ENCODE measurements at regions of chr1 and their contacts with region 1.

Region 1: GRCh38 chr1:230167419-230167852 is 100.4 kb downstream of the GALNT2 start:
- DNase-seq: peak; percentile 12
- H3K4me3 Mint-ChIP-seq: no peak overlapping the region
- H3K27ac Mint-ChIP-seq: no peak overlapping the region
- H3K4me1 Mint-ChIP-seq: peaks cover 39% of the 10 kb centered on the region
- H3K27me3 Mint-ChIP-seq: no peaks in the 10 kb centered on the region

Region 2: DNA sequence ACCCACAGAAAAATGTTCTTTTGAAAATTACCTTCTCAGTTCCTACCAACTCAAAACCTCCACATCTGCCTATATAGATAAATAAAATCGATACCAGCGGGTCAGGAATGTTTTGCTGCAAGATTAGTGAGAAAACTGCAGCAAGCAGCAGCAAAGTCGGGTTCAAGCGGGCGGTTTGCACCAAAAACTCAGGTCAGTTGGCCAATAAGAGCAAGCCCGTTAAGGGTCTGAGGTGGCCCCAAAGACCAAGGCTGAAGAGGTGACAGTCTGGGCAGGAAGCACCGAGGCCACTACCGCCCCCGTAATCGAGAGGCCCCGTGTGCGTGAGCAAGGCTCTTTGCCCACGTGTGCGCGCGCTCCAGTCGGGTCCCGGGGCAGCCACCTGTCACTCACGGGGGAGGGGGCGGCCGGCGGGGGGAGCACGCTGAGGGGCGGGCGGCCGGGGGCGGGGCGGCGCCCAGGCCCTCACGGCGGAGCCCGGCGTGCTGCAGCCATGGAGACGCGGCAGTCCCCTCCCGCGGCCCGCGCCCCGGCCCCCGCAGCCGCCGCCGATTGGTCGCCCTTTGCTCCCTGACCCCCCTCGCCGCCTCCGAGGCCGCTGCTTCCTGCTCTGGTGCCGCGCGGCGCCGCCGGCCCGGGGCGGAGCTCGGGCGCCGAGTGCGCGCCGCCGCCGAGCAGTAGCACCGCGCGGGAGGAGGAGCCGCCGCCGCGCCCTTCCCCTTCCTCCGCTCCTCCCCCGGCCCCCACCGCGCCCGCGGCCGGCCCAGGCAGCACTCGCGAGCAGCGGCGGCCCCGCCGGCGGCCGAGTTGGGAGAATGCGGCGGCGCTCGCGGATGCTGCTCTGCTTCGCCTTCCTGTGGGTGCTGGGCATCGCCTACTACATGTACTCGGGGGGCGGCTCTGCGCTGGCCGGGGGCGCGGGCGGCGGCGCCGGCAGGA is 100.7 kb before region 1 on chr1 and contains the start of gene GALNT2:
- intact Hi-C with region 1: loop called (anchors 1 kb)
- DNase-seq: peak; percentile 88
- H3K4me3 Mint-ChIP-seq: peak within 1 kb of the TSS; percentile 93
- H3K27ac Mint-ChIP-seq: peak within 1 kb of the TSS; percentile 89
- H3K4me1 Mint-ChIP-seq: peaks cover 48% of the 10 kb centered on the region
- H3K27me3 Mint-ChIP-seq: peaks cover 3% of the 10 kb centered on the region
- total RNA-seq, gene GALNT2: 67.6 and 67.9 TPM in 2 replicates

Region 3: DNA sequence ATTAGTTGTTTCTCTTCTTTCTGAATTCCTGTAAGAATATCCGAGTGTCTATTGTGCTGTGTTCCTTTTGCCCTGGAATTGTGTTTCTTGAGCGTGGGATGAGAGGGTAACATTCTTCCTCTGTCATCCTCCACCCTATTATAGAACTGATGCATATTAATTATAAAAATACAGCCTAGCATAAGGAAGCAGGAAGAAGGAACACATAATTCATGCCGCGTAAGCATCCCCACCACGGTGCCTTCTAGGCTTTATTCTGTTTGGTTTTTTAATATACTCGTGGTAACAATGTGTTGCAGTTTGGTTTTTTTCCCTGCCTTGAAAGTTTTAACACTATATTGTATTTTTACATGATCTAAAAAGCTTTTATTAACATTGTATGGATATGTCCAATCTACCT is 34.7 kb before region 1 on chr1:
- intact Hi-C with region 1: loop called (anchors 1 kb)
- DNase-seq: no peak
- H3K4me3 Mint-ChIP-seq: no peak overlapping the region
- H3K27ac Mint-ChIP-seq: no peak overlapping the region
- H3K4me1 Mint-ChIP-seq: peaks cover 31% of the 10 kb centered on the region
- H3K27me3 Mint-ChIP-seq: no peaks in the 10 kb centered on the region

Region 4: DNA sequence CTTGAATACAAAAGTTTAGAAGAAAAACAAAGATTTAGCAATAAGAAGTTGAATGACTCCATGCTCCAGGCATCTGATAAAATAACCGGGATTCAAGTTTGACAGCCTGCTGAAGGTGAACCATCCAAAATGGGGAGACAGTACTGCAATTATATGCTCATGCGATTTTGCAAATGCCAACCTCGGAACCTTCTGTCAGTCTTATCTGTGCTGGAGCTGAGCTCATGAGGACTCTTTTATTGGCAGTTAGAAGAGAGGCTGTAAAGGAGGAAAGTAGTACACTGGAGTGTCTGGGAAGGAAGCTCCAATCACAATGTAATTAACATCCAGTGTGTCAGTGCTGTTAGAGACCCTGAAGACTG is 69.6 kb after region 1 on chr1:
- intact Hi-C with region 1: no loop called
- DNase-seq: no peak
- H3K4me3 Mint-ChIP-seq: no peak overlapping the region
- H3K27ac Mint-ChIP-seq: no peak overlapping the region
- H3K4me1 Mint-ChIP-seq: peaks cover 27% of the 10 kb centered on the region
- H3K27me3 Mint-ChIP-seq: no peaks in the 10 kb centered on the region

Region 5: DNA sequence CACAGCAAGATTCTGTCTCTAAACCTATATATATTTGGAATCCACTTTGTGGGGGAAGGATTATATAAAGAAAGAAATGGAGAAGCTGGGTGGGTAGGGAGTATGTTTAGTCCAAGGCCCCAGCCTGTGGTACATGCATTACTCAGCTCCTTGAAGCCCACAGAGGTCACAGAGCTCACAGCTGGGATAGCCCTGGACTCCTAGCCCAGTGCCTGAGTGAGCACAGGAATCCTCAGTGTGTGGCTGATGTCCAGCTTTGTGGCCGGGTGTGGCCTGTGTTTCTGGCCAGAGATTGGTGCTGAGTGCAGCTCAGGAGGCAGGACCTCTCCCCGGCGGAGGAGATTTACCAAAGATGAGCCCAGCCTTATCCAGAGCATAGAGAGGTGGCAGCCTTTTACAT is 587.4 kb after region 1 on chr1:
- intact Hi-C with region 1: no loop called
- DNase-seq: no peak
- H3K4me3 Mint-ChIP-seq: no peak overlapping the region
- H3K27ac Mint-ChIP-seq: no peak overlapping the region
- H3K4me1 Mint-ChIP-seq: peaks cover 8% of the 10 kb centered on the region
- H3K27me3 Mint-ChIP-seq: no peaks in the 10 kb centered on the region